Mammary epithelial cell (primary cell): ENCODE measurements at regions of chr10 and their contacts with region 1.

Region 1: GRCh38 chr10:30783939-30784500 is 154.5 kb upstream of the LYZL2 start:
- DNase-seq: peak; percentile 18
- H3K4me3 ChIP-seq: no peak overlapping the region
- H3K27ac ChIP-seq: no peak overlapping the region
- H3K4me1 ChIP-seq: peaks cover 4% of the 10 kb centered on the region
- H3K27me3 ChIP-seq: no peaks in the 10 kb centered on the region
- CTCF ChIP-seq: peak; percentile 60 to 88

Region 2: GRCh38 chr10:30656233-30656632 is 127.8 kb before region 1 on chr10:
- CTCF ChIA-PET with region 1: no interaction called
- dilution Hi-C with region 1: no loop called
- in situ Hi-C with region 1: no loop called
- intact Hi-C with region 1: no loop called
- DNase-seq: no peak
- H3K4me3 ChIP-seq: no peak overlapping the region
- H3K27ac ChIP-seq: no peak overlapping the region
- H3K4me1 ChIP-seq: no peaks in the 10 kb centered on the region
- H3K27me3 ChIP-seq: peaks cover 4% of the 10 kb centered on the region
- CTCF ChIP-seq: no peak

Region 3: GRCh38 chr10:30902621-30903396 is 118.8 kb after region 1 on chr10:
- CTCF ChIA-PET with region 1: no interaction called
- dilution Hi-C with region 1: no loop called
- in situ Hi-C with region 1: no loop called
- intact Hi-C with region 1: no loop called
- DNase-seq: no peak
- H3K4me3 ChIP-seq: no peak overlapping the region
- H3K27ac ChIP-seq: no peak overlapping the region
- H3K4me1 ChIP-seq: no peaks in the 10 kb centered on the region
- H3K27me3 ChIP-seq: no peaks in the 10 kb centered on the region
- CTCF ChIP-seq: no peak

Region 4: DNA sequence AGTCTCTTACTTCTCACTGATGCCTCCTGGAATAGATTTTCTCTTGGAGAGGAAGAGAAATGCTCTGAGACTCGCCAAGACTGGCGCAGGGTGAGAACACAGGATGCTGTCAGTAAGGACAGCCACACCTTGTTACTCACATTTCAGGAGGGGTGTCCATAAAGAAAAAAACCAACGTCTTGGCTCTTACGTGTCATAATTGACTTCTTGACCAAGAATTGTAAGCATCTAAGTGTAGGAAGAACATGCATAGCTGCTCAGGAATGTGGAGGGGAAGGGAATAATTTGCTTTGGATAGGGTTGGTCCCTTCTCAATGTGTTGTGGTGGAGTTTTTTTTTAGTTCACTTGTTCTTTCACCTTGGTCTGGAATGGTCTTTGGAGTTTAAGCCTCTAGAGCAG is 291.4 kb after region 1 on chr10:
- CTCF ChIA-PET with region 1: no interaction called
- dilution Hi-C with region 1: no loop called
- in situ Hi-C with region 1: no loop called
- intact Hi-C with region 1: loop called (anchors 10 kb)
- DNase-seq: peak; percentile 96
- H3K4me3 ChIP-seq: no peak overlapping the region
- H3K27ac ChIP-seq: peak overlapping the region; percentile 81
- H3K4me1 ChIP-seq: peaks cover 44% of the 10 kb centered on the region
- H3K27me3 ChIP-seq: no peaks in the 10 kb centered on the region
- CTCF ChIP-seq: no peak

Region 5: DNA sequence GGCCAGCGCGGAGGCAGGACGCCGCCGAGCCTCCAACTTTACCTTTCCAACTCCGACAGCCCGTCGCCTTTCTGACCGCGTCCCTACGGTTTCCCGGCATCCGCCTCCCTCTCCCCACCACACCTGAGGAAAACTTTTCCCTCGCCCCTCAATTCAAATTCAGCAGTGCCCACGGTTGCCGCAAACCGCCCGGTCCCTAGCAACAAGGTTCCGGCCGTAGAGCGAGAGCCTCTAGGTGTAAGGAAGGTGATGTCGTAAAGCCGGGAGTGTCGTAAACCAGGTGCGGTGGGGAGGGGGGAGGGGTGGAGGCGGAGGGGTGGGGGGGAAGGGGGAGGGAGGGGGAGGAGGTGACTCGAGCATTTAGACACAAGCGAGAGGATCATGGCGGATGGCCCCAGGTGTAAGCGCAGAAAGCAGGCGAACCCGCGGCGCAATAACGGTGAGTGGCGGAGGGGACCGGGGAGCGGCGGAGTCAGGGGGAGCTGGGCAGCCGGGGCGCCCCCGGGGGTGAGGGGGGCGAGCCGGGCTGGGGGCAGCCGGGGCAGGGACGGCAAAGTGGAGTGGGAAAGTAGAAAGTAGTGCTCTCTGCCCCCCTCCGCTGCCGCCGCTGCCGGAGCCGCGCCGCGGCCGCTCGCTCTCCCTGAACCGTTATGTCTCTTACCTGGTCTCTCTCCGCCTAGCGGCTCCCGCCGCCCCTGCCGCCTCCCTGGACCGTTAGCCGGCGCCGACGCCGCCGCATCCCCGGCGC is 535.0 kb after region 1 on chr10 and contains the start of gene ZEB1:
- CTCF ChIA-PET with region 1: no interaction called
- dilution Hi-C with region 1: no loop called
- in situ Hi-C with region 1: no loop called
- intact Hi-C with region 1: loop called (anchors 1 kb)
- DNase-seq: peak; percentile 86
- H3K4me3 ChIP-seq: peak within 1 kb of the TSS; percentile 76 to 98 (median 98)
- H3K27ac ChIP-seq: peak within 1 kb of the TSS; percentile 72
- H3K4me1 ChIP-seq: peaks cover 21% of the 10 kb centered on the region
- H3K27me3 ChIP-seq: peaks cover 26% of the 10 kb centered on the region
- CTCF ChIP-seq: peak; percentile 12 to 54
- total RNA-seq, gene ZEB1: 1.2 to 1.3 TPM

Region 6: DNA sequence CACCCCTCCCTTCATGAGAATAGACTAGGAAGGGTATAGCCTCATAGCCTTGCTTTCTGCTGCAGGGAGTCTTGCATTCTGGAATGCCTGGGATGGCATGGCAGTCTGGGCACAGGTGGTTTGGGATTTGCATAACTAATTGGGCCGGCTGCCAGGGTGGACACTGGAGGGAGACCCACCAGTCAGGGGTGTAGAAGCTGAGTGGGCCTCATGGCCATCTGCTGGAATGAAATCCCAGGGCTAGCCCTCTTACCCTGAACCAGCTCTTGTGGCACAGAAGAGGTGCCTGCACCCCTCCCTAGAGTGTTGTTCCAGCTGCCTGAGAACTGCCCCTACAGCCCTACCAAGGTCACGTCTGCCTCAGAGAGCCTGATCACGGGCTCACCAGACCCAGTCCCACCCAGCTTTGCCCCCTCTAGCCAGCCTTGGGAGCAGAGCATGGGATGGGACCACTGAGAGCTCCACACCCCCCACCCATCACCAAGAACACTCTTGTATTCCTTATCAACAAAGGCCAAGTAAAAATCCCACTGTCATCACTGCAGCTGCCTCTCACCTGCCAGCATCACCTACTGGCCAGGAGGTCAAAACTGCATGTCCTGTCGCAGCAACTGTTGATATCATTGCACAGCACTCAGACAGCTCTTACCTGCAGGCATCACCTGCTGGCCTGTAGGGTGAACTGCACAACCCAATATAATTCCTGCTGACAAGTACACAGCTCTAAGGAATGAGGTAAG is 683.9 kb after region 1 on chr10:
- CTCF ChIA-PET with region 1: interaction called, 6 read pairs
- dilution Hi-C with region 1: no loop called
- in situ Hi-C with region 1: no loop called
- intact Hi-C with region 1: loop called (anchors 1 kb)
- DNase-seq: peak; percentile 47
- H3K4me3 ChIP-seq: no peak overlapping the region
- H3K27ac ChIP-seq: no peak overlapping the region
- H3K4me1 ChIP-seq: no peaks in the 10 kb centered on the region
- H3K27me3 ChIP-seq: no peaks in the 10 kb centered on the region
- CTCF ChIP-seq: peak; percentile 94 to 99

Region 7: DNA sequence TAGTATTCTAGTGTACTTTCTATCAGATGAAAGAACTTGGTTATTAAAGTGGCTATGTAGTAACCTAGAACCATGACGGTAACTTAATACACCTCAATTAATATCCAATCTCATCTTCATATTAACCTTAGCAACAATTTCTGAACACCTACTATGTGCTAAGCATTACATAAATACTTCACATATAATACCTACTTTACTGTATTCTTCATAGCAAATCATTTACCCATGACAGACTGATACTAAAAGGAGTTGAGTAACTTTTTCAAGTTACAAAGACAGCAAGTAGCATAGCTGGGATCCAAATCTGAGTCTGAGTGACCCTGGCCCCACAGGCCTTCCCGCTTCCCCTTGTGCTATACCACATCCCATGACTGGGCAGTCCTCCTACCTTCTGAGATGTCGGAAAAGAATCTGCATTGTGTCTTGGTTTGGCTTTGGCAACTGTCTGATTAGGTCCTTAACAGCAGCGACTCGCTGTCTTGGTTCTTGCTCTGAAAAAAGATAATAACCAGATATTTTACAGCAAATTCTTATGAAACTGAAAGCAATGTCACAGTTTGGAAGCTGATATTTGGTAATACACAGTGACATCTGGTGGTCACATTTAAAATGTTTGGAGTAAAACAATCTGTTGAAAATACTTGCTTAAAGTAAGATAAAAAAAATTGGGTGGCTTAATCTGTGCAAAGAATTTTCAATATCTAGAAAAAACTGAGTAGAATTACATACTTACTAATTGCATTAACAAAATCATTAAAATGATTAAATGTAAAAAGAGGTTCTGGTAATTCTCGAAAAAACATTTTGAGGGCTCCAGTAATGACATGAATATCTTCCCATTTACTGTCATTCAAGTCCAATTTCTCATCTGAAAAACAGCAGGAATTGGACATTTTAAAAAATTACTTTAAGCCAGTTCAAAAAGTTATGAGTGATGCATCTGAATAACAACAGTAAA is 1024.5 kb after region 1 on chr10:
- CTCF ChIA-PET with region 1: no interaction called
- dilution Hi-C with region 1: no loop called
- in situ Hi-C with region 1: no loop called
- intact Hi-C with region 1: loop called (anchors 1 kb)
- DNase-seq: peak; percentile 18
- H3K4me3 ChIP-seq: no peak overlapping the region
- H3K27ac ChIP-seq: no peak overlapping the region
- H3K4me1 ChIP-seq: no peaks in the 10 kb centered on the region
- H3K27me3 ChIP-seq: no peaks in the 10 kb centered on the region
- CTCF ChIP-seq: peak in 1 of 2 donors; percentile 40